ENCODE measurements at regions of chr2 and their contacts with region 1.

Region 1: GRCh38 chr2:177164584-177165052 is 48.0 kb upstream of the HNRNPA3 start:
- DNase-seq: peak; percentile 63 to 88 (median 76)
- ATAC-seq: peak; percentile 75
- H3K4me3 ChIP-seq: peak overlapping the region; percentile 33
- H3K4me3 Mint-ChIP-seq: no peak overlapping the region
- H3K27ac ChIP-seq: no peak overlapping the region
- H3K27ac Mint-ChIP-seq: no peak overlapping the region
- H3K4me1 ChIP-seq: peaks cover 14% of the 10 kb centered on the region
- H3K4me1 Mint-ChIP-seq: peaks cover 16% of the 10 kb centered on the region
- H3K27me3 ChIP-seq: no peaks in the 10 kb centered on the region
- H3K27me3 Mint-ChIP-seq: no peaks in the 10 kb centered on the region
- CTCF ChIP-seq: peak; percentile 99

Region 2: DNA sequence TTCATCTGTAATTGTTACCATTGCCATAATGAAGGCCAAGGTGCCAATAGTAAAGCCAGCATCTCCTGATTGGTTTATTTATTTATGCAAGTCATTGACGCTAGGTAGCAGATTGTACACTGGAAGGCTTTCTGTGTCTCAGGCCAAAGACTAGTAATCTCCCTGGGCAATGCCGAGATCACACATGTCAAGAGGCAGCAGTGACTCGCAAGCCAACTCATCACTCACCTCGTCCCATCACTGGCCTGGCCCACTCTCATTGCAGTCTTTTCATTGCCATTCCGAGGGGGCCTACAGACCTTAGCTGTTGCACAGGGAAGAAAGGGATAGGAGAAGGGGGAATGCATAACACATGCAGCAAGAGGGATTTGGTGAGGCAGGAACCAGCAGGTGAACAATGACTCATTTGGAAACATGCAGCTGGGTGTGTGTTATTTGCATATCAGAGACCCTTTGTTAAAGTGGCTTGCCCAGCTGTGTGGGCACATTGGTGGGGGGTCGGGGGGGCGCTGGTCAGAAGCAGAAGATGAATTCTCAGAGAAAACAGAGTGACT is 400.7 kb before region 1 on chr2:
- CTCF ChIA-PET with region 1: no interaction called
- POLR2A ChIA-PET with region 1: no interaction called
- intact Hi-C with region 1: no loop called
- DNase-seq: no peak
- ATAC-seq: no peak
- H3K4me3 ChIP-seq: no peak overlapping the region
- H3K4me3 Mint-ChIP-seq: no peak overlapping the region
- H3K27ac ChIP-seq: no peak overlapping the region
- H3K27ac Mint-ChIP-seq: no peak overlapping the region
- H3K4me1 ChIP-seq: no peaks in the 10 kb centered on the region
- H3K4me1 Mint-ChIP-seq: no peaks in the 10 kb centered on the region
- H3K27me3 ChIP-seq: peaks cover 0 to under 1% of the 10 kb centered on the region in 2 experiments
- H3K27me3 Mint-ChIP-seq: peaks cover 52% of the 10 kb centered on the region
- CTCF ChIP-seq: no peak

Region 3: DNA sequence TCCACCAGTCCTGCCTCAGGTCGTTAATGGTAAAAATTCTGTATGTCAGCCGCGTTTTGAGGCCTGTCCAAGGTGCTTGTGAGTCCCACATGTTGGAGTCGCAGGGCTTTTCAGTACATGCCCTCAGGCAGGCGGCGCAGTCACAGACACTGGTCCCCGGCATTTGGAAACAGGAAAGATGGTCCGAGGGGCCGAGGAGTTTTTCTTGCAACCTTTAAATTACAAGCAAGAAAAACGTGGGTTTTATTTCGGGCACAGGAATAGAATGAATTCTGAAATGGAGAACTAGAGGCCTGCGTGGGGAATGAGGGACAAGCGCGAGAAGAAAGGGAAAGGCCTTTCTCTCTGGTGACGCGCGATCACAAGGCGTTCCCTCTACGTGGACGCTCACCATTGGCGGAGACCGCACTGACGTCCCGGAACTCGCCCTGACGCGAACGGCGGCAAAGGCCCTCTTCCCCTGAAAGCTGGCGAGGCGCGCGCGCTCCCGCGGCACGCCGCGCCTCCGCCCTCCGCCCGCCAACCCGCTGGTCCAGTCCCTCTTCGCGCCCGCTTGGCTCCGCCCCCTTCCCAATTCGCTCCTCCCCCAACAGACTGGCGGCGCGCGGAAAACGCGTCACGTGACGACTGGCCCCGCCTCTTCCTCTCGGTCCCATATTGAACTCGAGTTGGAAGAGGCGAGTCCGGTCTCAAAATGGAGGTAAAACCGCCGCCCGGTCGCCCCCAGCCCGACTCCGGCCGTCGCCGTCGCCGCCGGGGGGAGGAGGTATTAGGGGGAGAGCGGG is 47.7 kb after region 1 on chr2 and contains the start of gene HNRNPA3:
- CTCF ChIA-PET with region 1: interaction called, 8 read pairs
- POLR2A ChIA-PET with region 1: interaction called, 60 read pairs
- intact Hi-C with region 1: loop called (anchors 2 kb)
- DNase-seq: peak; percentile 99 to 100 (median 100)
- ATAC-seq: peak; percentile 81
- H3K4me3 ChIP-seq: peak within 1 kb of the TSS; percentile 86
- H3K4me3 Mint-ChIP-seq: peak within 1 kb of the TSS; percentile 88
- H3K27ac ChIP-seq: peak within 1 kb of the TSS; percentile 98 to 100
- H3K27ac Mint-ChIP-seq: peak within 1 kb of the TSS; percentile 99
- H3K4me1 ChIP-seq: peaks cover 37% of the 10 kb centered on the region
- H3K4me1 Mint-ChIP-seq: peaks cover 61% of the 10 kb centered on the region
- H3K27me3 ChIP-seq: no peaks in the 10 kb centered on the region
- H3K27me3 Mint-ChIP-seq: no peaks in the 10 kb centered on the region
- CTCF ChIP-seq: peak; percentile 33
- total RNA-seq, gene HNRNPA3: 162 to 167 TPM

Region 4: GRCh38 chr2:177332041-177332991 is 167.7 kb after region 1 on chr2:
- CTCF ChIA-PET with region 1: interaction called, 58 read pairs
- POLR2A ChIA-PET with region 1: interaction called, 12 read pairs
- intact Hi-C with region 1: loop called (anchors 1 kb)
- DNase-seq: peak in 12 of 14 experiments; percentile 9 to 81 (median 22)
- ATAC-seq: peak; percentile 88
- H3K4me3 ChIP-seq: no peak overlapping the region
- H3K4me3 Mint-ChIP-seq: peak overlapping the region; percentile 1
- H3K27ac ChIP-seq: no peak overlapping the region
- H3K27ac Mint-ChIP-seq: no peak overlapping the region
- H3K4me1 ChIP-seq: peaks cover 7% of the 10 kb centered on the region
- H3K4me1 Mint-ChIP-seq: peaks cover 10% of the 10 kb centered on the region
- H3K27me3 ChIP-seq: no peaks in the 10 kb centered on the region
- H3K27me3 Mint-ChIP-seq: no peaks in the 10 kb centered on the region
- CTCF ChIP-seq: peak; percentile 72

Region 5: DNA sequence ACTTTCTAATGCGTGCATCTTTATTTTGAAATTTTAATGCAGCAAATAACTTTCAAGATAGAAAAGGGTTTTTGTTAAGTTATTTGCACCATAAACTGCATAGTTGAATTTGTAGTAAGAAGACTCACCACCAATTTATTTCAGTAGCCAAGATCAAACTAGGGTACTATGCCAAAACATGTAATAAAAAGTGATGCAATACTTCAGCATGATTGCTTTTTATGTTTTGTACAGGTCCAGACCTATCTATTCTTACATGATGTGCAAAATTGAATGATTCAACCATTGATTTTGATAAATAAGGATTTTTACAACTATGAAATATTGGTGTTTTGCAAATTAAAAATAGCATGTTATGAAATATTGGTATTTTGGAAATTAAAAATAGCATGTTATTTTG is 254.7 kb after region 1 on chr2:
- CTCF ChIA-PET with region 1: interaction called, 46 read pairs
- POLR2A ChIA-PET with region 1: interaction called, 7 read pairs
- intact Hi-C with region 1: loop called (anchors 1 kb)
- DNase-seq: no peak
- ATAC-seq: no peak
- H3K4me3 ChIP-seq: no peak overlapping the region
- H3K4me3 Mint-ChIP-seq: no peak overlapping the region
- H3K27ac ChIP-seq: no peak overlapping the region
- H3K27ac Mint-ChIP-seq: no peak overlapping the region
- H3K4me1 ChIP-seq: no peaks in the 10 kb centered on the region
- H3K4me1 Mint-ChIP-seq: peaks cover 29% of the 10 kb centered on the region
- H3K27me3 ChIP-seq: no peaks in the 10 kb centered on the region
- H3K27me3 Mint-ChIP-seq: no peaks in the 10 kb centered on the region
- CTCF ChIP-seq: no peak

Region 6: DNA sequence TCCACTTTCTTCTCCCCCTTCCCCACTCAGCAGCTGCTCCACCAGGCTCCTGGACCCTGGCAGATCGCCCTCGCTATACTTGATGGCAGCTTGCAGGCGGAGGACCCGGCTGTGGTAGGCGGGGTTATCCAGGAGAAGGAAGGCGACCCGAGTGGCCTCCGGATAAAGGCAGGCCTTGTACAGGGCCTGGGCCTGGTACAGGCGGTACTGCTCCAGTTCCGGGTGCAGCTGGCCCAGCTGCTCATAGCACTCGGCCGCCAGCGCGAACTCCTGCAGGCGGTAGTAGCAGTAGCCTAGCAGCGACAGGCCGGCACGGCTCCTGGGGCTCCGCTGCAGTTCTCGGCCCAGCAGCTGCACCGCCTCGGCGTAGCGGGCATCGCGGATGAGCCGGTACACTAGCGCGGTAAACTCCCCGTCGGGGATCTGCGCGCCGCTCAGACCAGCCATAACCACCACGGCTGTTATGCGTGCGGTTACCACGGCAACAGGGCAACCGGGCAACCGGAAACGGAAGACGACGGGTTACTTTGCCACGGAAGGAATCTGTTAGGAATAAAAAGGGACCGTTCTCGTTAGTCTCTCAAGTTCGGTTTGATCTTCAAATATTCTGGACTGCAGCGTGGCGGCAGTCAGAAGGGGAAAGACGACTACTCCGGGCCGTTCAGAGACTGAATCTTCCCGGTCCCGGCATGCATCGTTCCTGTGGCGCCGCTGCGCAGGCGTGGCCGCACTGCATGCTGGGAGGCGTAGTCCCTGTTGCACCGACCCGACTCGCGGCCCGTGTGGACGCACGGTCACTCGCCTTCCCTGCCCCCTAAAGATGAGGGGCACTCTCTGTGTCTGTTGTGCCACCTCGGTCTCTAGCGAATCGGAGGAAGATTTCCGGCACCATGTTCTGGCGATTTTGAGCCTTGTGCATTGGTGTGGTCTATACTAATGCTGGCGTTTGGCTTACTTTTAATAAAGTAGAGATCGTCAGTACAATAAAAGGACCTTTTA is 453.9 kb after region 1 on chr2:
- CTCF ChIA-PET with region 1: no interaction called
- POLR2A ChIA-PET with region 1: no interaction called
- intact Hi-C with region 1: loop called in 1 of 2 experiments (anchors 5 kb)
- DNase-seq: peak; percentile 83 to 96 (median 89)
- ATAC-seq: peak; percentile 89
- H3K4me3 ChIP-seq: peak overlapping the region; percentile 72
- H3K4me3 Mint-ChIP-seq: peak overlapping the region; percentile 96
- H3K27ac ChIP-seq: peak overlapping the region; percentile 89 to 98
- H3K27ac Mint-ChIP-seq: peak overlapping the region; percentile 94
- H3K4me1 ChIP-seq: peaks cover 14% of the 10 kb centered on the region
- H3K4me1 Mint-ChIP-seq: peaks cover 8% of the 10 kb centered on the region
- H3K27me3 ChIP-seq: no peaks in the 10 kb centered on the region
- H3K27me3 Mint-ChIP-seq: peaks cover 12% of the 10 kb centered on the region
- CTCF ChIP-seq: no peak

Region 7: DNA sequence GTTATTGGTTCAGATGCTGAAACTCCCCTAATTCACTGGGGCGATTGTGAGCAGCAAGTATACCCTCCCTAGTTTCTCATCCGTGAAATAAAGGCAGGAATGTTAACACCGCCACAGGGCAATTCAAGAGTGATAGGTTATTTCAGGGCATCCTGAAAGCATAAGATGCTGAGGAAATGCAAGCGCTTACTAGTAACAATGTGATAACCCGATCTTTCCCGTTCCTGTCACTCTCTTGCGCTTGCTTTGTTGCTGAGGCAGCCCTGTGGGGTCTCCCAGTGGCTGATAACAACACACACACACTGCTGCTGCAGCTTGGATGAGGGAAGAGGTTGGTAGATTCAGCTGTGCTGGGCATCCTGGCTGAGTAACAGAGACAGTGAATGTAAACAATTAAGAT is 487.2 kb after region 1 on chr2:
- CTCF ChIA-PET with region 1: no interaction called
- POLR2A ChIA-PET with region 1: no interaction called
- intact Hi-C with region 1: no loop called
- DNase-seq: no peak
- ATAC-seq: no peak
- H3K4me3 ChIP-seq: no peak overlapping the region
- H3K4me3 Mint-ChIP-seq: no peak overlapping the region
- H3K27ac ChIP-seq: no peak overlapping the region
- H3K27ac Mint-ChIP-seq: no peak overlapping the region
- H3K4me1 ChIP-seq: no peaks in the 10 kb centered on the region
- H3K4me1 Mint-ChIP-seq: no peaks in the 10 kb centered on the region
- H3K27me3 ChIP-seq: peaks cover 4 to 10% of the 10 kb centered on the region in 2 experiments
- H3K27me3 Mint-ChIP-seq: peaks cover 25% of the 10 kb centered on the region
- CTCF ChIP-seq: no peak